Sciatic nerve (tissue), 2 donors: ENCODE measurements at regions of chr5 and their contacts with region 1.

Region 1: DNA sequence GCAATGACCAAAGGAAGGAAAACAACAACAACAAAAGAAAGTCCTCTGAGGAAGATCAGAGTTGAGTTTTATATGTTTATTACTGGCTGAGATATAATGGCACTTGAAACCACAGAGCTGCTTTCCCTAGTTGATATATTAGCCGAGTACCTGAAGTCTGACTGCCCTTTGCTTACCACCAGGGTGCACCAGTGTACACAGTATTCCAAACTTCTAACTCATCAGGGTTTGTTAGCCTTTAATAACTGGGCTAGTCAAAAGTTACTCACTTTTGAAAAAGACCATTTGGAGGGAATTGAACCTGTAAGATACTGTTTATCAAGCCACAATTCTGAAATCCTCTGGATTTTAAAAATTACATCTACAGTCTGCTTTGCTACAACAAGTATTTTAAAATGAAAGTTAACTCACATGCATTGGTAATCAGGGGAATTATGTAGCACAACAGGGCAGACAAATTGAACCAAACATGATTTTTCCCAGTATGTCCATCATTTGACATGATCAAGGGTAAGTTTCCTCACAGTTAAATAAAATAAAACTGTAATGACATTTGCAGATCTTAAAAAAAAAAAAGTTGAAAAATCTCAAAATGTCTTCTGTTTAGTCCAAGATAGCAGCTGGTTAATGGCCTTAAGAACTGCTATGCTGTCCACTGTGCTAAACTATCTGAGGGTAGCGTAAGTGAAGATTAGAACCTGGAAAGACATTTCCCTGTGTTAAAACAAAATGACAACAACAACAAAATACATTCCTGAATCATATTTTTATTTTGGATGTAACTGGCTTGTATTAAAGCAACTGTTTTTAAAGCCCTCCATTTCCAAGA is 57.3 kb upstream of the C6 start:
- DNase-seq: peak; percentile 58
- ATAC-seq: peak; percentile 92

Region 2: GRCh38 chr5:41843456-41844370 is 573.1 kb after region 1 on chr5:
- intact Hi-C with region 1: loop called (anchors 10 kb)
- DNase-seq: no peak
- ATAC-seq: peak; percentile 76